HepG2 (cell line): ENCODE measurements at regions of chr1 and their contacts with region 1.

Region 1: DNA sequence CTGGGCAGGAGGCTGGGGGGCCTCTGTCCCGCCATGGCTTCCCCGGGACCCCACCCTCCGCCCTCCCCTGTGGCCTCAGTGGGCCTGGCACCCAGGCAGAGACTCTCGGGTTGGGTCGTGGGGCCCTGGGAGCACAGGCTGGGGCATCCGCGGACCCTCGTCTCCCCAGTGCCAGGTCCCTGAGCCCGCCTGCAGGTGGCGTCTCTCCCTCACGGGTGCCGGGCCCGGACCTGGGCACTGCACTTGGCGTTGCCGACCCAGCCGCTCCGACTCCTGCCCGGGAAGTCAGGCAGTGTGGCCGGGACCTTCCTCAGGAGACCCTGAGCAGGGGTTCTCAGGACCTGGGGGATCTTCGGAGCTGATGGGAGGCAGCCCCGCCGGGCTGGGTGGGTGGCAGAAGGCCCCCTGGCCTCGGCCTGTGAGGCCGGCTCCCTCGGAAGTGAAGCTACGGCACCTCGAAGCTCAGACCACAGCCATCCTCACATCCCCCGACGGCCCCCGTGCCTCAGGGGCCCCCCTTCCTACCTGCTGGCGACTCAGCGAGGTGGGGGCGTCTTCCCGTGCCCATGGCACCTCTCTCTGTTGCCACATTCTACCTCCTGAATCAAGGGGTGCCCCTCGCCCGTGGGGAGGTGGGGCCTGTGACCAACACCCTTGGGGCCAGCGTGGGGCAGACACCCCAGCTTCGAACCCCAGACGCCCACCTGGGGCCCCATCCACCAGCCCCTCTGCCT is 6.4 kb upstream of the C1orf159 start:
- DNase-seq: peak; percentile 52
- ATAC-seq: peak; percentile 67
- H3K4me3 ChIP-seq: peak overlapping the region; percentile 41 to 72 (median 49); a peak in 5 of 6 replicates
- H3K27ac ChIP-seq: no peak overlapping the region
- H3K4me1 ChIP-seq: peaks cover 66% of the 10 kb centered on the region
- H3K27me3 ChIP-seq: peaks cover 7 to 35% of the 10 kb centered on the region in 2 experiments; a peak in 4 of 5 replicates
- CTCF ChIP-seq: peak; percentile 99
- EP300 ChIP-seq: no peak
- POLR2A ChIP-seq: no peak
- RAD21 ChIP-seq: peak; percentile 98

Region 2: GRCh38 chr1:1173793-1174415 is 51.7 kb after region 1 on chr1 and contains the start of gene TTLL10:
- CTCF ChIA-PET with region 1: no interaction called
- POLR2A ChIA-PET with region 1: interaction called, 93 read pairs
- in situ Hi-C with region 1: no loop called
- intact Hi-C with region 1: loop called (anchors 1 kb)
- DNase-seq: no peak
- ATAC-seq: peak; percentile 56
- H3K4me3 ChIP-seq: peak within 1 kb of the TSS in 1 of 3 experiments; percentile 33; a peak in 1 of 6 replicates
- H3K27ac ChIP-seq: no peak within 1 kb of the TSS
- H3K4me1 ChIP-seq: peaks cover 21% of the 10 kb centered on the region
- H3K27me3 ChIP-seq: peaks cover 37 to 70% of the 10 kb centered on the region in 2 experiments
- CTCF ChIP-seq: peak; percentile 69
- EP300 ChIP-seq: no peak
- POLR2A ChIP-seq: no peak
- RAD21 ChIP-seq: no peak
- total RNA-seq, gene TTLL10: not detected in 2 replicates

Region 3: DNA sequence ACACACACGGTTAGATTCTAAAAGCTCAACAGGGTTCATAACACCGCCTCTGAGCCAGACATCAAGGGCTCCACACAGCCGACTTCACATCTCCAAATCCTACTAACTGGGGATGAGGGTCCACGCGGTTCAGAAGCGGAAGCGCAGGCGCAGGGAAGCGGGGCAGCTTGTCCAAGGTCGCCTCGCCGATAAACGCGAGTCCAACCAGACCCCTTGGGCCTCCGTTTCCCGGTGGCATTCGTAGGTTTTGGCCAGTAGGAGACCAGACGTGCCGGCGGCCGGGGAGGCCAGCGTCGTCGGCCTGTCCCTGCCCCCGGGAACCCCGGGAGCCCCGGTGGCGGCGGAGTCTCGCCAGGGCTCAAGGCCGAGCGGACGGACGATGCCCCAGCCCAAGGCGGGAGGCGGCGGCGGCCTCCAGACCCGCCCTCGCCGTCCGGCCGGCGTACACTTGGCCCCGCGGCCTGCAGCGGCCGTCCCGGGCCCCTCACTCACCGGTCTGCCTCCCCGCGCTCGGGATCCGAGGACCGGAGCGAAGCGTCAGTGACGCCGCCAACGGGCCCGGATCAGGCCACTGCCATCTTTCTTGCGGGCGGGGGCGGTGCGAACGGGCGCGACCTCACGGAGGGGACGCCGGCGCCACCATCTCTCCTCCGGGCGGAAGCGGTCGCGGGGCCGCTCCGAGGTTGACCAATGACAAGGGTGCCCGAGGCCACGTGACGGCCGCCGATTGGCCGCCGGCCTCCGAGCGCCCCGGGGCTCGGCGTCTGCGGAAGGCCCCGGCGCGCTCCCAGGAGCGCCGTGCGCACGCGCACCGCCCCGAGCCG is 109.4 kb after region 1 on chr1 and contains the start of gene SDF4:
- CTCF ChIA-PET with region 1: interaction called, 5 read pairs
- POLR2A ChIA-PET with region 1: interaction called, 25 read pairs
- in situ Hi-C with region 1: no loop called
- intact Hi-C with region 1: loop called (anchors 5 kb)
- DNase-seq: peak; percentile 88
- ATAC-seq: peak; percentile 84
- H3K4me3 ChIP-seq: peak within 1 kb of the TSS; percentile 73 to 93 (median 91)
- H3K27ac ChIP-seq: peak within 1 kb of the TSS; percentile 88
- H3K4me1 ChIP-seq: peaks cover 58% of the 10 kb centered on the region
- H3K27me3 ChIP-seq: no peaks in the 10 kb centered on the region; a peak in 2 of 5 replicates
- CTCF ChIP-seq: 0 out of 2 replicates have a peak, but pooled peaks have one; percentile 3
- EP300 ChIP-seq: no peak
- POLR2A ChIP-seq: peak in 1 of 2 experiments; percentile 68; a peak in 2 of 4 replicates
- RAD21 ChIP-seq: peak; percentile 67
- total RNA-seq, gene SDF4: 45.3 and 107 TPM in 2 replicates

Region 4: DNA sequence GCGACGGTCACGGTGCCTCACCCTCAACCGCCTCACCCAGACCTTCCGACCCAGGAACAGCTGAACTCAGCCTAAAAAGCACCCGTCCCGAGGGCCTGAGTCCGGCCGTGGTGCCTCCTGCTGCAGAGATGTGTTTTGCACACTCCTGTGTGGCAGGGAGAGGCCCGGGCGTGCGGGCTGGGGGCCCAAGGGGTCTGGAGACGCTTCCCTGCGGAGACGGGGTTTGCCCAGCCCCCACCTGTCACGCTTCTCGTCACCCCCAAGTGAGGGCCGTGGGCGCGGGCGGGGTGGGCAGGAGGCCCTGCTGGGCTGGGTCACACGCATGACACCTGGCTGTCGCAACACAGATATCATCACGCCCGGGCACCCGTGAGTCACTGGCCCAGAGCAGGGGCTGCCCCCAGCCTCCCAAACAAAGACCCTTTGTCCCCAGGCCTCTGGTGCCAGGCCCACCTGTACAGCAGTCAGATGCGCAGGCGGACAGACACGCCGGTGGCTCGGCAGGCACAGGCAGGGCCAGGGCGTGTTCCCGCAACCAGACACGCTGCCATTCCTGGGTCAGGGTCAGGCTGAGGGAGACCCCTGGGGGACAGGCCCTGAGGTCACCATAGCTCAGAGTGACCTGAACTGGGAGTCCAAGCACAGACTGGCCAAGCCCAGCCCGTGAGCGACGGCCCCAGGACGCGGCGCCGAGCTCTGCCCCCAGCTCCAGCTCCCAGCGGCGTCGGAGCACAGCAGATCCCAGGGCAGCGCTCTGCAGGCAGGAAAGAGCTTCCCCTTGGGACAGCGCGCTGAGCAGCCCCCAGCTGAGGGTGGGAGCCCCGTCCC is 115.8 kb after region 1 on chr1:
- CTCF ChIA-PET with region 1: no interaction called
- POLR2A ChIA-PET with region 1: interaction called, 26 read pairs
- in situ Hi-C with region 1: no loop called
- intact Hi-C with region 1: loop called (anchors 5 kb)
- DNase-seq: peak; percentile 84
- ATAC-seq: peak; percentile 58
- H3K4me3 ChIP-seq: peak overlapping the region; percentile 39 to 80 (median 47)
- H3K27ac ChIP-seq: peak overlapping the region; percentile 48
- H3K4me1 ChIP-seq: peaks cover 80% of the 10 kb centered on the region
- H3K27me3 ChIP-seq: no peaks in the 10 kb centered on the region; a peak in 1 of 5 replicates
- CTCF ChIP-seq: peak; percentile 45; the same call in 1 of the 2 replicates
- EP300 ChIP-seq: peak in 1 of 2 experiments; percentile 38; a peak in 1 of 4 replicates
- POLR2A ChIP-seq: peak in 1 of 2 experiments; percentile 50; a peak in 1 of 4 replicates
- RAD21 ChIP-seq: no peak

Region 5: DNA sequence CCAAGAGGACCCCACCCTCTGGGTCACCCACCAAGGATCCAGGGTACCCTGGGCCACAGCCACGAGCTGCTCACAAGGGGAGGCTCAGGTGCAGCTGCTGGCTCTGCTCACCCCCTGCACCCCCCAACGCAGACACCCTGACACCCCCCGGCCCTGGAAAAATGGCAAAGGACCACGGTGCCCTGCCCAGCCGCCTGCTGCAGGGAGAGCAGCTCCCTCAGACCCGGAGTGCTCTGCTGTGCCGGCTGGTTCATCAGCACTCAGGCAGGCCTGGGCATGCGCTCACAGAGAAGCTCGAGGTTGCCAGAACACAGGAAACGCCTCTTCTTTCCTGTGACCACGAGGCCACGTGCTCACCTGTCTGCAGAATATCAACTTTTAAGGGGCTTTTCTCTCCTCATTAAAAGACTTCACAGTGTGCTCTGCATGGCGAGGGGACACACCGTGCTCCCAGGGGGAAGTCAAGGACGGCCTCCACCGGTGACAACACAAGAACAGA is 128.6 kb after region 1 on chr1:
- CTCF ChIA-PET with region 1: interaction called, 8 read pairs
- POLR2A ChIA-PET with region 1: interaction called, 6 read pairs
- in situ Hi-C with region 1: no loop called
- intact Hi-C with region 1: loop called (anchors 5 kb)
- DNase-seq: no peak
- ATAC-seq: peak; percentile 8; the same call in 1 of the 3 replicates
- H3K4me3 ChIP-seq: no peak overlapping the region
- H3K27ac ChIP-seq: no peak overlapping the region
- H3K4me1 ChIP-seq: no peaks in the 10 kb centered on the region
- H3K27me3 ChIP-seq: no peaks in the 10 kb centered on the region
- CTCF ChIP-seq: no peak
- EP300 ChIP-seq: no peak
- POLR2A ChIP-seq: no peak
- RAD21 ChIP-seq: no peak

Region 6: GRCh38 chr1:1291548-1292441 is 169.6 kb after region 1 on chr1:
- CTCF ChIA-PET with region 1: interaction called, 4 read pairs
- POLR2A ChIA-PET with region 1: interaction called, 5 read pairs
- in situ Hi-C with region 1: no loop called
- intact Hi-C with region 1: loop called (anchors 5 kb)
- DNase-seq: peak; percentile 64
- ATAC-seq: peak; percentile 71
- H3K4me3 ChIP-seq: no peak overlapping the region
- H3K27ac ChIP-seq: no peak overlapping the region
- H3K4me1 ChIP-seq: peaks cover 11% of the 10 kb centered on the region
- H3K27me3 ChIP-seq: no peaks in the 10 kb centered on the region
- CTCF ChIP-seq: peak; percentile 96
- EP300 ChIP-seq: no peak
- POLR2A ChIP-seq: no peak
- RAD21 ChIP-seq: peak; percentile 79; the same call in 1 of the 2 replicates